ENCODE measurements at regions of chr10 and their contacts with region 1.

Region 1: DNA sequence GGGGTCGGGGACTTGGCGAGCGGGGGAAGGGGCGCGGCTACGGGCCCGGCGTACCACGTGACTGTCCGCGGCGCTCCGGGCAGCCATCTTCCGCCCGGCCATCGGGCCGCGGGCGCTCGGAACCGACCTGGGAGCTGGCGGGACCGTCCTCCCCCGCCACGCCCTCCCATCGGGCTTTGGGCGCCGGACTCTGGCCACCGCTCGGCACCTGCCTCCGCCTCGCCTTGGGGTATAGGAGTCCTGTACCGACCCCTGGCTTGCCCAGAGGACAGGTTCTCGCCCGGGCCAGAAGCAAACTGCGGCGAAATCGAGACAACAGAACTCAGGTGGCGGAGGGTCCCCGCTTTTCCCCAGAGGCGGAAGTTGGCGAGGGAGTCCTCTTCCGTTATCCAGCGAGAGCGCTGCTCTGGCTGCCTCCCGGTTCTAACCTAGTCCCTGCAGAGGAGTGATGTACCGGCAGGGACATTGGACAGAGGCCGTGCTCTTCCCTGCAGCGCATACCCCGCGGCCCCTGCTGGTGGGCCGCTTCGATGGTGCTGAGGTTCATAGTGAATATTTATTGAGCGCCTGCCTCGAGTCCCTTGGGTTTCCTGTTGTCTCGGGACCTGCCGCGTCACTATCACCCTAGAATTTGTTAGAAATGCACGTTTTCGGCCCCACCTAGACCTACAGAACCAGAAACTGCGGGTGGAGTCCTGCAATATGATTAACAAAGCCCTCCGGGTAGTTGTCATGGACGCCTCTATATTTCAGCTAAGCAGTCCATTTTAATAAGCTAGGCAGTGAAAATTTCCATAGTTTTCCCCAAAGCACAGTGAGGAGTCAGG is 1.3 kb upstream of the SGMS1 start:
- DNase-seq: peak; percentile 76
- ATAC-seq: peak; percentile 50
- H3K4me3 Mint-ChIP-seq: peak overlapping the region; percentile 95
- H3K27ac Mint-ChIP-seq: peak overlapping the region; percentile 92
- H3K4me1 Mint-ChIP-seq: peaks cover 46% of the 10 kb centered on the region
- H3K27me3 Mint-ChIP-seq: peaks cover 14% of the 10 kb centered on the region

Region 2: GRCh38 chr10:50552771-50553535 is 72.1 kb before region 1 on chr10:
- CTCF ChIA-PET with region 1: interaction called, 10 read pairs
- DNase-seq: peak; percentile 73
- ATAC-seq: peak; percentile 86
- H3K4me3 Mint-ChIP-seq: no peak overlapping the region
- H3K27ac Mint-ChIP-seq: no peak overlapping the region
- H3K4me1 Mint-ChIP-seq: peaks cover 12% of the 10 kb centered on the region
- H3K27me3 Mint-ChIP-seq: no peaks in the 10 kb centered on the region

Region 3: GRCh38 chr10:50636618-50637579 is 11.8 kb after region 1 on chr10:
- CTCF ChIA-PET with region 1: interaction called, 21 read pairs
- DNase-seq: peak; percentile 78
- ATAC-seq: peak; percentile 91
- H3K4me3 Mint-ChIP-seq: peak overlapping the region; percentile 63
- H3K27ac Mint-ChIP-seq: peak overlapping the region; percentile 81
- H3K4me1 Mint-ChIP-seq: peaks cover 41% of the 10 kb centered on the region
- H3K27me3 Mint-ChIP-seq: peaks cover 60% of the 10 kb centered on the region

Region 4: DNA sequence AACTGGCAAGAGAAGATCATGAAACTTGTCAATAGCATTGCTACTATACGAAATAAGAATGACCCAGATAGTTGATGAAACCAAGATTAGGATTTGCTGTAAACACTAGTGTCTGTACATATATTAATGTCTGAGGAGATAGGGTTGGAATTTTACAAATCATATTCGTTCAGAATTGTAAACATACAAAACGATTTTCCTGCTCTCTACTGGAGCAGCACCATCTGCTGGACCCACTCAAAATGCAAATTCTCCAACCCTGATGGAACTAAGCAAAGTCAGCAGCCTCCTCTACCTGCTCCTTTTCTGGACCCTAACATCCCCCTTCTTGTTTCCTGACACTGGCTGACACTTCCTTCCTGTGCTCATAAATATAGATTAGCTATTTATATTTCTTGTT is 28.1 kb after region 1 on chr10:
- CTCF ChIA-PET with region 1: interaction called, 13 read pairs
- DNase-seq: no peak
- ATAC-seq: peak; percentile 53
- H3K4me3 Mint-ChIP-seq: no peak overlapping the region
- H3K27ac Mint-ChIP-seq: no peak overlapping the region
- H3K4me1 Mint-ChIP-seq: peaks cover 18% of the 10 kb centered on the region
- H3K27me3 Mint-ChIP-seq: no peaks in the 10 kb centered on the region

Measured in activated CD8-positive, alpha-beta memory T cell treated with anti-CD3 and anti-CD28 coated beads, Interleukin-2, amount 10 ng/mL, durations not matched to agents 7 days and 5 days (primary cell).